Activated CD4-positive, alpha-beta memory T cell treated with anti-CD3 and anti-CD28 coated beads, Interleukin-2, amount 10 ng/mL, durations not matched to agents 7 days and 5 days (primary cell): ENCODE measurements at regions of chr2 and their contacts with region 1.

Region 1: GRCh38 chr2:206800506-206801417 is 35.4 kb downstream of the FASTKD2 start:
- DNase-seq: peak; percentile 60
- H3K4me3 Mint-ChIP-seq: peak overlapping the region; percentile 51
- H3K27ac Mint-ChIP-seq: peak overlapping the region; percentile 46
- H3K4me1 Mint-ChIP-seq: peaks cover 18% of the 10 kb centered on the region
- H3K27me3 Mint-ChIP-seq: no peaks in the 10 kb centered on the region

Region 2: GRCh38 chr2:206740800-206741199 is 60.0 kb before region 1 on chr2:
- CTCF ChIA-PET with region 1: no interaction called
- POLR2A ChIA-PET with region 1: no interaction called
- DNase-seq: no peak
- H3K4me3 Mint-ChIP-seq: no peak overlapping the region
- H3K27ac Mint-ChIP-seq: no peak overlapping the region
- H3K4me1 Mint-ChIP-seq: no peaks in the 10 kb centered on the region
- H3K27me3 Mint-ChIP-seq: peaks cover 11% of the 10 kb centered on the region

Region 3: GRCh38 chr2:206790311-206790935 is 10.3 kb before region 1 on chr2:
- CTCF ChIA-PET with region 1: interaction called, 18 read pairs
- POLR2A ChIA-PET with region 1: no interaction called
- DNase-seq: no peak
- H3K4me3 Mint-ChIP-seq: no peak overlapping the region
- H3K27ac Mint-ChIP-seq: no peak overlapping the region
- H3K4me1 Mint-ChIP-seq: no peaks in the 10 kb centered on the region
- H3K27me3 Mint-ChIP-seq: no peaks in the 10 kb centered on the region